AG04449 (cell line): ENCODE measurements at regions of chr9 and their contacts with region 1.

Region 1: DNA sequence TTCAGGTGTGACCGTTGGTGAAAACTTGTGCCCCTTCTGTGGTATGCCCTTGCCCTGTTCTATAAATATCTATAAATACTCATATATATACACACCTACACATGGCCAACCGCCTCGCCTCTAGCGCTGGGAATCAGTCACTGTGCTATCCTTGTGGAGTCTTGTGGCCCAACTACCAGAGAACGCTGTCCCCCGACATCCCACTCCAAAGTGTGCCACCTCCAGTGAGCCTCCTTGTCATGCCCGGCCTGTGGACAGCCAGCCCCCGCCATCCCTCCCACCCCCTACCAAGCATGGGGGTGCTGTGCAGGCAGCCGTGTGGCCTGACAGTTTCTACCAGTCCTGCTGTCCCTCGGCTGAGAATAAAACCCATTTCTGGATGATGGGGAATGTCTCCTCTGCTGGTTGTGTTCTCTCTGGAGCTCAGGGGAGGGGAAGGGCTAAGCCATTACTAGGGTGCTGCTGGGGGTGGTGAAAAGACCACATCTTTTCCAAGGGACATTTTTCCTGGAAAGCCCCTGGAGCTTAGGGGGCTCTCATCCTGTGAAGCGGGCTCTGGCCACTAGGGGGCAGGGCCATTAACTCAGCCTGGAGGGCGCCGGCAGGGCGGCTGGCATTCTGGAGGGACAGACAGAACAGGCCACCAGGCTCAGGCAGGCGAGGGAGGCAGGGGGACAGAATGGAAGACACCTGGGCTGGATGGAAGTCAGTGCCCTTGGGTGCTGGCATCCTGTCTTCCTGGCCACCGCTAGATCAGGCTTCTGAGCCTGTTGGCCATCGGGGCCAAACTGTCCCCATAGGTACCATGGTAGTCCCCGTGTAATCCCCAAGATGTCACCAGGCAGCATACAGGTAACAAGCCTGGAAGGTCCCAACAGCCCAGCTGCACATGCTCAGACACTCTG is 20.7 kb downstream of the GOLGA2 start:
- DNase-seq: no peak
- H3K4me3 ChIP-seq: no peak overlapping the region
- CTCF ChIP-seq: peak; percentile 89

Region 2: DNA sequence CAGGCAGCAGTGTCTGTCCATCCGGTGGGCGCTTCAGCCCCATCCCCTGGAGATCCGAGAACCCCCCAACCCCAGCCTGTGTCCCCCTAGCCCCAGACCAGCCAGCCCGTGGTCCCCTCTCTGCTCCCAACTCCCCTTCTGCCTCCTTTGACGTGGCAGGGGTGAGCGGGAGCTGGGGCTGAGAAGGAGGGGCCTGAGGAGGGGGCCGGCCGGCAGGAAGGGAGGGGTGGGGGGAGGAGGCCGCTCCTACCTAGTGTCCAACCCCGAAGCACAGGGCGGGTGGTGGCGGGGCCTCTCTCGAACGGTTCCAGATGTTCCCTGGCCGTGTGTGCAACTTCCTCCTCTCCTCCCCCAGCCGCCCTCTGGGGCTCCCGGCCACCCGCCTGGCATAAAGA is 10.3 kb before region 1 on chr9:
- CTCF ChIA-PET with region 1: interaction called, 37 read pairs
- POLR2A ChIA-PET with region 1: interaction called, 7 read pairs
- DNase-seq: peak; percentile 42
- H3K4me3 ChIP-seq: peak overlapping the region; percentile 67
- CTCF ChIP-seq: no peak

Region 3: DNA sequence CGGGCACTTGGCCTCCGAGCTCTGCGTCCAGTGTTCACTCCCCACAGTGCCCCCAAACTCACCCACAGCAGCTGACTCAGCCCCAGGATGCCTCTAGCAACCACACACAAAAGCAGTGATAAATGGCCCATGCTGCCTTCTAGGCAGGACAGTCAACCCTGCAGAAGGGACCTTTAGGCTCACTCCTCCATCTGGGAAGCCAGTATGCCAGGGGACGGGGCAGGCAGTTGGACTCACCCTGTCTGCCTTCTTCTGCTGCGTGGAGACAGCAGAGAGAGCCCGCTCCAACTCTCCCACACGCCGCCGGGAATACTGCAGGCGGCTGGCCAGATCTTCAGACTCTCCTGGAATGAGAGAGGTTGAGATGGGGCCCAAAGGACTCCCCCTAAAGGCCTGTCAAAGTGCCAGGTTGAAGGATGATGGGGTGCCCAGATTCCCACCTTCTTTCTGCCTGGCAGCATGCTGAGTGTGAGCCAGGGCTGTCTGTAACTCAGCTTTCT is 10.3 kb after region 1 on chr9:
- CTCF ChIA-PET with region 1: interaction called, 32 read pairs
- POLR2A ChIA-PET with region 1: interaction called, 5 read pairs
- DNase-seq: no peak
- H3K4me3 ChIP-seq: no peak overlapping the region
- CTCF ChIP-seq: no peak